GM12878 (cell line): ENCODE measurements at regions of chr3 and their contacts with region 1.

Region 1: GRCh38 chr3:182814419-182815062 is 21.2 kb downstream of the ATP11B start:
- DNase-seq: no peak
- ATAC-seq: no peak
- H3K4me3 ChIP-seq: no peak overlapping the region
- H3K27ac ChIP-seq: no peak overlapping the region
- H3K4me1 ChIP-seq: no peaks in the 10 kb centered on the region
- H3K27me3 ChIP-seq: no peaks in the 10 kb centered on the region
- CTCF ChIP-seq: no peak
- EP300 ChIP-seq: no peak
- POLR2A ChIP-seq: no peak
- RAD21 ChIP-seq: no peak

Region 2: DNA sequence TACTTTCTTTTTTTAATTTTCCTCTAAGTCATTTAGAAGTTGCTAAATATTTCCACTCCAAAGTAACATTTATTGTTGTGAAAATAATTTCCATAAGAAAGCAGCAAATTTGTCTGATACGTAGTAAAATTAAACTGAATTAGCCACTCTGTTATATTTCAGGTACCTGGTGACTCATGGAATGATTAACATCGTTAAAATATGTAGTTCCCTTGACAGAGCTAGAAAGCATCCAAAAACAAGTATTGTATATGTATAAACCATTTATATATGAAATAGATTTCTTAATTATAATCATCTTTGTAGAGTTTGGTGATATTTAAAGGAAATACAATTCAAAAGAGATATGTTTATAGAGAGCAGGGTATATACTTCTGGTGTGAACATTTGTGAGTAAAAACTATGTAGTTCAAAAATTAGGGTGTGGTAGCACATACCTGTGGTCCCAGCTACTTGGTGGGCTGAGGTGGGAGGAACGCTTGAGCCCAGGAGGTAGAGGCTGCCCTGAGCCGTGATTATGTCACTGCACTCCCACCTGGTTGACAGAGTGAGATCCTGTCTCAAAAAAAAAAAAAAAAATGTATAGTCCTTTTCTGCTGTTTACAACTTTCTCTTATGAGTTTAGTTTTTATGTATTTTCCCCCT is 15.3 kb after region 1 on chr3:
- CTCF ChIA-PET with region 1: interaction called, 5 read pairs
- POLR2A ChIA-PET with region 1: no interaction called
- RAD21 ChIA-PET with region 1: no interaction called
- SMC1A ChIA-PET with region 1: interaction called, 10 read pairs
- in situ Hi-C with region 1: no loop called
- intact Hi-C with region 1: no loop called
- DNase-seq: no peak
- ATAC-seq: no peak
- H3K4me3 ChIP-seq: no peak overlapping the region
- H3K27ac ChIP-seq: no peak overlapping the region
- H3K4me1 ChIP-seq: peaks cover 2% of the 10 kb centered on the region; the same call in 1 of the 2 replicates
- H3K27me3 ChIP-seq: no peaks in the 10 kb centered on the region
- CTCF ChIP-seq: no peak
- EP300 ChIP-seq: no peak
- POLR2A ChIP-seq: no peak
- RAD21 ChIP-seq: no peak